ENCODE measurements at regions of chr14 and their contacts with region 1.

Region 1: GRCh38 chr14:74084277-74085046 is at the starts of genes ALDH6A1 and LIN52:
- DNase-seq: peak; percentile 100
- H3K4me3 Mint-ChIP-seq: peak within 1 kb of the TSS; percentile 100
- H3K27ac Mint-ChIP-seq: peak within 1 kb of the TSS; percentile 98
- H3K4me1 Mint-ChIP-seq: peaks cover 39% of the 10 kb centered on the region
- H3K27me3 Mint-ChIP-seq: no peaks in the 10 kb centered on the region
- total RNA-seq, gene ALDH6A1: 25.0 to 25.7 TPM
- total RNA-seq, gene LIN52: 13.5 to 14.4 TPM

Region 2: GRCh38 chr14:73058224-73058921 is 1026.1 kb before region 1 on chr14 and contains the start of gene RBM25:
- CTCF ChIA-PET with region 1: no interaction called
- POLR2A ChIA-PET with region 1: no interaction called
- intact Hi-C with region 1: loop called (anchors 1 kb)
- DNase-seq: peak; percentile 97
- H3K4me3 Mint-ChIP-seq: no peak within 1 kb of the TSS
- H3K27ac Mint-ChIP-seq: no peak within 1 kb of the TSS
- H3K4me1 Mint-ChIP-seq: peaks cover 34% of the 10 kb centered on the region
- H3K27me3 Mint-ChIP-seq: no peaks in the 10 kb centered on the region
- total RNA-seq, gene RBM25: 89.6 to 97.9 TPM

Region 3: GRCh38 chr14:73696466-73697400 is 387.7 kb before region 1 on chr14:
- CTCF ChIA-PET with region 1: no interaction called
- POLR2A ChIA-PET with region 1: no interaction called
- intact Hi-C with region 1: loop called (anchors 2 kb)
- DNase-seq: no peak
- H3K4me3 Mint-ChIP-seq: peak overlapping the region; percentile 55
- H3K27ac Mint-ChIP-seq: peak overlapping the region; percentile 86
- H3K4me1 Mint-ChIP-seq: peaks cover 38% of the 10 kb centered on the region
- H3K27me3 Mint-ChIP-seq: no peaks in the 10 kb centered on the region

Region 4: GRCh38 chr14:73949744-73950734 is 134.4 kb before region 1 on chr14 and contains the starts of genes COQ6 and FAM161B:
- CTCF ChIA-PET with region 1: no interaction called
- POLR2A ChIA-PET with region 1: interaction called, 4 read pairs
- intact Hi-C with region 1: loop called (anchors 1 kb)
- DNase-seq: peak; percentile 96
- H3K4me3 Mint-ChIP-seq: peak within 1 kb of the TSS; percentile 97
- H3K27ac Mint-ChIP-seq: peak within 1 kb of the TSS; percentile 86
- H3K4me1 Mint-ChIP-seq: peaks cover 17% of the 10 kb centered on the region
- H3K27me3 Mint-ChIP-seq: no peaks in the 10 kb centered on the region
- total RNA-seq, gene COQ6: 18.7 to 19.3 TPM
- total RNA-seq, gene FAM161B: 1.1 to 1.4 TPM

Region 5: GRCh38 chr14:74257078-74257989 is 172.9 kb after region 1 on chr14:
- CTCF ChIA-PET with region 1: interaction called, 7 read pairs
- POLR2A ChIA-PET with region 1: no interaction called
- intact Hi-C with region 1: loop called (anchors 10 kb)
- DNase-seq: peak; percentile 74
- H3K4me3 Mint-ChIP-seq: peak overlapping the region; percentile 75
- H3K27ac Mint-ChIP-seq: no peak overlapping the region
- H3K4me1 Mint-ChIP-seq: peaks cover 4% of the 10 kb centered on the region
- H3K27me3 Mint-ChIP-seq: peaks cover 8% of the 10 kb centered on the region

Region 6: GRCh38 chr14:74493343-74494261 is 409.1 kb after region 1 on chr14 and contains the start of gene ISCA2:
- CTCF ChIA-PET with region 1: no interaction called
- POLR2A ChIA-PET with region 1: no interaction called
- intact Hi-C with region 1: loop called (anchors 2 kb)
- DNase-seq: peak; percentile 100
- H3K4me3 Mint-ChIP-seq: peak within 1 kb of the TSS; percentile 87
- H3K27ac Mint-ChIP-seq: peak within 1 kb of the TSS; percentile 80
- H3K4me1 Mint-ChIP-seq: peaks cover 21% of the 10 kb centered on the region
- H3K27me3 Mint-ChIP-seq: no peaks in the 10 kb centered on the region
- total RNA-seq, gene ISCA2: 33.6 to 35.2 TPM

Region 7: GRCh38 chr14:74893614-74894091 is 809.2 kb after region 1 on chr14:
- CTCF ChIA-PET with region 1: no interaction called
- POLR2A ChIA-PET with region 1: no interaction called
- intact Hi-C with region 1: no loop called
- DNase-seq: no peak
- H3K4me3 Mint-ChIP-seq: no peak overlapping the region
- H3K27ac Mint-ChIP-seq: no peak overlapping the region
- H3K4me1 Mint-ChIP-seq: no peaks in the 10 kb centered on the region
- H3K27me3 Mint-ChIP-seq: no peaks in the 10 kb centered on the region